ENCODE measurements at regions of chr11 and their contacts with region 1.

Region 1: GRCh38 chr11:73760679-73761402 is at the start of gene RAB6A:
- DNase-seq: peak; percentile 96
- H3K4me3 ChIP-seq: peak within 1 kb of the TSS; percentile 87 to 89
- H3K27ac ChIP-seq: peak within 1 kb of the TSS; percentile 84 to 89
- H3K4me1 ChIP-seq: peaks cover 4 to 13% of the 10 kb centered on the region in 2 experiments; a peak in 2 of 4 replicates
- H3K27me3 ChIP-seq: no peaks in the 10 kb centered on the region
- CTCF ChIP-seq: peak; percentile 30
- EP300 ChIP-seq: no peak
- RAD21 ChIP-seq: peak; percentile 30; the same call in 1 of the 2 replicates
- polyA plus RNA-seq, gene RAB6A: 39.1 and 48.8 TPM in 2 replicates

Region 2: DNA sequence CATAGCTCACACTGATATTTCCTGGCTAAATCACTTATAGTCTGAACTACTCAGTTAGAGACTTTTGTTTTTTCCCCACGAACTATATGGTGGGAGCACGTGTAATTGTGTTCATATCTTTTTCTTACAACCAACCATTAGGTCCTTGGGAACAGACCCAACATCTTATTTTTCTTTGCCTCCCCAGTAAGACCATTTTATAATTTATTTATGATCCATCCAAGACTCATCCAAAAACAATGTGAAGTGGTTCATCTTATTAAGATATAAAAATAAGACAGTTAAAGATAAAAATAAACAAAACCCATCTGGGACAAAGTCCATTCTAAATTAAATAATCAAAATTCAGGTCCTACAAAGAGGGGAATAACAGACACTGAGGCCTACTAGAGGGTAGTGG is 253.8 kb before region 1 on chr11:
- CTCF ChIA-PET with region 1: no interaction called
- POLR2A ChIA-PET with region 1: no interaction called
- DNase-seq: no peak
- H3K4me3 ChIP-seq: no peak overlapping the region
- H3K27ac ChIP-seq: peak overlapping the region in 1 of 2 experiments; percentile 60; a peak in 2 of 4 replicates
- H3K4me1 ChIP-seq: peaks cover 0 to 6% of the 10 kb centered on the region in 2 experiments; a peak in 3 of 4 replicates
- H3K27me3 ChIP-seq: no peaks in the 10 kb centered on the region
- CTCF ChIP-seq: no peak
- EP300 ChIP-seq: no peak
- RAD21 ChIP-seq: no peak

Region 3: GRCh38 chr11:73779084-73779902 is 18.5 kb after region 1 on chr11:
- CTCF ChIA-PET with region 1: interaction called, 15 read pairs
- POLR2A ChIA-PET with region 1: interaction called, 89 read pairs
- DNase-seq: peak; percentile 96
- H3K4me3 ChIP-seq: peak overlapping the region; percentile 53 to 64
- H3K27ac ChIP-seq: peak overlapping the region; percentile 86 to 94
- H3K4me1 ChIP-seq: no peaks in the 10 kb centered on the region
- H3K27me3 ChIP-seq: no peaks in the 10 kb centered on the region
- CTCF ChIP-seq: no peak
- EP300 ChIP-seq: peak in 1 of 2 experiments; percentile 40; a peak in 1 of 4 replicates
- RAD21 ChIP-seq: peak; percentile 32; the same call in 1 of the 2 replicates

Region 4: GRCh38 chr11:73787643-73788537 is 27.0 kb after region 1 on chr11 and contains the start of gene MRPL48:
- CTCF ChIA-PET with region 1: no interaction called
- POLR2A ChIA-PET with region 1: interaction called, 12 read pairs
- DNase-seq: peak; percentile 96
- H3K4me3 ChIP-seq: peak within 1 kb of the TSS; percentile 61 to 89
- H3K27ac ChIP-seq: peak within 1 kb of the TSS; percentile 90 to 97
- H3K4me1 ChIP-seq: peaks cover 2 to 4% of the 10 kb centered on the region in 2 experiments; a peak in 2 of 4 replicates
- H3K27me3 ChIP-seq: no peaks in the 10 kb centered on the region
- CTCF ChIP-seq: no peak
- EP300 ChIP-seq: no peak; a peak in 1 of 4 replicates
- RAD21 ChIP-seq: no peak
- polyA plus RNA-seq, gene MRPL48: 28.3 and 29.2 TPM in 2 replicates

Measured in SK-N-SH (cell line).